ENCODE measurements at regions of chr21 and their contacts with region 1.

Region 1: DNA sequence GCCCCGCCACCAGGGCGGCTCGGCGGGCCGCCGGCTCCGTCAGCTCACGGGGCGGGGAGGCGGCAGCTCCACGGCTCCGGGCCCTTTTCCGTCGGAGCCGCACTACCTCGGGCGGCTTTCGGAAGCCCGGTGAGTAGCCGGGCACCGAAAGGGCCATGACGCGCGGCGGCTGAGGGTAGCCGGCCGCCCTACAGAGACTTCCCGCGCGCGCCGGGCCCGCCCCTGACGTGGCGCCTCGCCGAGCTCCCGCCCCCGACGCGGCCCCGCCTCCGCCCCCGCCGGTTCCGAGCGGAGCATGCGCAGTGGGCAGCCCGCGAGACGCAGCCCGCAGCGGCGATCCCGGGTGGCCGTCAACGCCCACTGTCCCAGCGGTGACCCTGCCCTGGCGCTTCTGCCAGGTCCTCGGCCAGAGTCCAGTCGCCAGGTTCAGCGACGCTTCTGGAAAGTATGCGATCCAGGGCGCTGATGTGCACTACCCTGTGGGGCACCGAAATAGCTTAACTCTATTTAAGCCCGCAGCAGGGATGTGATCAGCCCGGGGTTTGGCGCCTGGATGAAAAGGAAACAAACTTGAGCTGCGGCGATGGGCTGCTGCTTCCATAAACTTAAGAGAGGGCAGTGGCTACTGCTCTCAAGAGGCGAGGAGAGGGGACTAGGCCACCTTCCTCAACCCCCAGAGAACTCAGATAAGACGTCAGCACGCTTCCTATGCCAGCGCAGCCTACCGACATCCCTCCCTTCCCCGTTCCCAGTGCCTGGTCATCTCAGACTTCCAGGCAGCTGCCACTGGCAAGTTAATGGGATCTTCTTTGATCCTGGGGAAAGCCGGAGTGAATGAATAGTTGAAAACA is at the start of gene DONSON:
- H3K4me3 ChIP-seq: peak within 1 kb of the TSS; percentile 69
- H3K27ac ChIP-seq: peak within 1 kb of the TSS; percentile 89
- H3K4me1 ChIP-seq: peaks cover 4% of the 10 kb centered on the region; the same call in 1 of the 2 replicates
- CTCF ChIP-seq: no peak

Region 2: DNA sequence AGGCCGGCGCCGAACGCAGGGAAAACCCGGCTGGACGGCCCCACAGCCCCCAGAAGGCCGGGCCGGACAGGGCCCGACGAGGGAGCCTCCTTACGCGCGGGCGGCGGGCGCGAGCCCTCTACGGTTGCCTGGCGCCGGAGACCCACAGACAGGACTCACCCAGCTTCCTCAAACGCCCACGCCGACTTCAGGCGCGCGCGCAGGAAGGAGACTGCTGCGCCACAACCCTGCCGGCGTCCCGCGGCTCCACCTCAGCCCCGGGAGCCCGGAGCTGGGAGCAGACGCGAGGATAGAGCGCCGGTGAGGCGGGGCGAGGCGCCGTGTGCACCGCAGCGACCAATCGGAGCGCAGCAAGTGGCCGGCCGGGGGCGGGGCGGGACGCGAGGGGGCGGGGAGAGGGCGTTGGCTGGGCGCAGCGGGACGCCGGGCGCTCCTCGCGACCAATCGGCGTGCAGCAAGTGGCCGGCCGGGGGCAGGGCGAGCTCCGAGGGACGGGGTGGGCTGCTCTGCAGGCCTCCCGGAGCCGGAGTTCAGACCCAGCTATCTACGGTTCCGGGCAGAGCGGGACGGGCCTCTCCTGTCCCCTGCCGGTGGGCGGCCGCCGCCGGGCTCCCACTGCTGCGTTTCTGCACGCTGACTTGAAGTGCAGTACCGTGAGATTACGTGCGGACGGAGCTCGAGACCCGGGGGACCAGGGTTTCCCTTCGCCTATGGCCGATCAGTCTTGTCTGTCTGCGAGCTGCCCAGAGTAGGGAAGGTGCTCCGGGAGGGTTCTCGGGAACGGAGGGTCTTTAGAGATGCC is 108.8 kb before region 1 on chr21 and contains the start of gene TMEM50B:
- CTCF ChIA-PET with region 1: no interaction called
- POLR2A ChIA-PET with region 1: interaction called, 19 read pairs
- H3K4me3 ChIP-seq: peak within 1 kb of the TSS; percentile 59
- H3K27ac ChIP-seq: peak within 1 kb of the TSS; percentile 87
- H3K4me1 ChIP-seq: peaks cover 2% of the 10 kb centered on the region; the same call in 1 of the 2 replicates
- CTCF ChIP-seq: peak; percentile 98

Region 3: GRCh38 chr21:33542640-33543504 is 45.8 kb before region 1 on chr21 and contains the start of gene SON:
- CTCF ChIA-PET with region 1: interaction called, 4 read pairs
- POLR2A ChIA-PET with region 1: interaction called, 15 read pairs
- H3K4me3 ChIP-seq: peak within 1 kb of the TSS; percentile 98
- H3K27ac ChIP-seq: peak within 1 kb of the TSS; percentile 93
- H3K4me1 ChIP-seq: peaks cover 12% of the 10 kb centered on the region
- CTCF ChIP-seq: 0 out of 2 replicates have a peak, but pooled peaks have one; percentile 48

Region 4: DNA sequence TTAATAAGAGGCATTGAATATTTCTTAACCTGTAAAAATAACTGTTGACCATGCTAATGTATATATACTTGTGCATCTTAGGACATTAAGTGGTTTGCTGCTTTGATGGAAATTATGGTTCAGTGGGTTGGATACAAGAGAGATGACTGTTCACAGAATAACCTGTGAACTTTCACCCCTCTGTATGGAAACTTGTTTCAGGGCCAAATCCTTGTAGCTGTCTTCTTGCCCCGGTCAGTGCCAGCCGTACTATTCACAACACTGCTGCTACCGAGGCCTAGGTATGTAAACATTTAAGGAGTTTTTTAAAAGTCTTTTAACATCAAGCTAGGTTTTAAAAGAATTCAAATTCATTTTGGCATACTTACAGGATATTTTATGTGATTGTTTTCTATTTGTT is 16.4 kb before region 1 on chr21:
- CTCF ChIA-PET with region 1: interaction called, 3 read pairs
- POLR2A ChIA-PET with region 1: interaction called, 13 read pairs
- H3K4me3 ChIP-seq: no peak overlapping the region
- H3K27ac ChIP-seq: no peak overlapping the region
- H3K4me1 ChIP-seq: no peaks in the 10 kb centered on the region
- CTCF ChIP-seq: no peak

Region 5: GRCh38 chr21:33901412-33902288 is 312.9 kb after region 1 on chr21:
- CTCF ChIA-PET with region 1: interaction called, 12 read pairs
- POLR2A ChIA-PET with region 1: interaction called, 6 read pairs
- H3K4me3 ChIP-seq: no peak overlapping the region
- H3K27ac ChIP-seq: no peak overlapping the region
- H3K4me1 ChIP-seq: no peaks in the 10 kb centered on the region
- CTCF ChIP-seq: peak; percentile 56

Measured in HEK293 (cell line).